A673 (cell line): ENCODE measurements at regions of chr18 and their contacts with region 1.

Region 1: DNA sequence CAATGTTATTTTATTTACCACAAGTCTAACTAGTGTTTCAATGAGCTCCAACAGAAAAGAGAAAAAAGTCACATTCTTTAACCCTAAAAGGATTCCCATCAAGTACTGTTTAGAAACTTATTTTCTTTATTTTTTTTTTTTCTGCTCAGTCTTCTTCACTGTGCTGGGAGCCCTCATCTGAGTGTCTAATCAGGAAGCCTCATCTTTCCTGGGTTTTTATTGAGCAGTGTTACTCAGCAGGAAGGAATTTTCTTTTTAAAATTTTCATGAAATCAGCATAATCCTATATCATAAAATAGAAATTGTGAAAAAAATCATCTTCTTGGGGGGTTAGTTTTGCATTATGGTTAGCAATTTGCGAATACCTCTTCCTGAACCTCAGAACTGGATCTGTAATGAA is 453.8 kb downstream of the CDH2 start:
- DNase-seq: peak; percentile 34
- H3K4me3 ChIP-seq: no peak overlapping the region
- H3K27ac ChIP-seq: no peak overlapping the region
- H3K4me1 ChIP-seq: no peaks in the 10 kb centered on the region
- H3K27me3 ChIP-seq: no peaks in the 10 kb centered on the region
- CTCF ChIP-seq: no peak

Region 2: GRCh38 chr18:27709344-27709743 is 13.8 kb before region 1 on chr18:
- CTCF ChIA-PET with region 1: no interaction called
- POLR2A ChIA-PET with region 1: no interaction called
- intact Hi-C with region 1: loop called (anchors 1 kb)
- DNase-seq: no peak
- H3K4me3 ChIP-seq: no peak overlapping the region
- H3K27ac ChIP-seq: no peak overlapping the region
- H3K4me1 ChIP-seq: peaks cover 21% of the 10 kb centered on the region
- H3K27me3 ChIP-seq: no peaks in the 10 kb centered on the region
- CTCF ChIP-seq: no peak